Activated CD4-positive, alpha-beta T cell treated with anti-CD3 and anti-CD28 coated beads for 36 hours (primary cell): ENCODE measurements at regions of chr16 and their contacts with region 1.

Region 1: GRCh38 chr16:30615358-30616091 is 5.3 kb upstream of the ZNF689 start:
- DNase-seq: peak; percentile 94
- ATAC-seq: peak; percentile 89
- H3K4me3 Mint-ChIP-seq: no peak overlapping the region
- H3K27ac Mint-ChIP-seq: no peak overlapping the region
- H3K4me1 Mint-ChIP-seq: peaks cover 4% of the 10 kb centered on the region
- H3K27me3 Mint-ChIP-seq: no peaks in the 10 kb centered on the region

Region 2: DNA sequence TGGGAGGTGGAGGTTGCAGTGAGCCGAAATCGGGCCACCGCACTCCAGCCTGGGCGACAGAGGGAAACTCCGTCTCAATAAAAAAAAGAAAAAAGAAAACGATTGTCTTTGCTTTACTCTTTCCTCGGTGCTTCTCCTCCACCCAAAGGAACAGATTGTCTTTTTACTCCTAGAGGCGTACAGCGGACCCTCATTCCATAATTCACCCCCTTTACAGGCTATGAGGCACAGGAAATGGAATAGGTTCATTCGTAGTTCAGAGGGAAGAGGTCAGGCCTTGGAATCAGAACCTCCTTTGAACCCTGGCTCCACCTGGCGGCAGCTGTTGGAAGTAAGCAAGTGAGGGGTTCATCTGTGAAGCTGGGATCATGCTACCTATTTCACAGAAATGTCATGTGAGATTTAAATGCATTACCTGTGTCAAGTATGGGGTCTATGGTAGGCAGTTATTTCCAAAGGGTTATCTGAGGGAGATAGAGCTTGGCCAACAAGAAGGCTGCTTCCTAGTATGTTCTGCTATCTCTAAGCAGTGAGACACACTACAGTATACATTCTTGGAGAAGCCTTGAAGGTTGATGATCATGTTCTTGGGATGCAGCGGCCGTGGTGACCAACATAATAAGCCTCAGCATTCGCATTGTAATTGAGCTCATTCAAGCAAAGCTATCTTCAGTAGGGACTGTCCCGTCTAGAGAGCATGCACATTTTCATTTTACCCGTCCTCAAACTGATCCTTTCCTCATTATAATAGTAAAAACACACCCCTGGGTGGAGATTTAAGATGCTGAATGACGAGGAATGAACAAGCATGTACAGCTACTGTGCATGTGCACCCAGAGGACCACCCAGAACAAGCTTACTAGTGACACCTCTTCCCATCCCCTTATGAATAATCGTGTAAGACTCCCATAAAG is 13.4 kb after region 1 on chr16:
- CTCF ChIA-PET with region 1: interaction called, 30 read pairs
- POLR2A ChIA-PET with region 1: interaction called, 3 read pairs
- intact Hi-C with region 1: loop called in 1 of 2 experiments (anchors 1 kb)
- DNase-seq: peak; percentile 95
- ATAC-seq: peak; percentile 93
- H3K4me3 Mint-ChIP-seq: peak overlapping the region; percentile 58
- H3K27ac Mint-ChIP-seq: peak overlapping the region; percentile 82
- H3K4me1 Mint-ChIP-seq: peaks cover 14% of the 10 kb centered on the region
- H3K27me3 Mint-ChIP-seq: no peaks in the 10 kb centered on the region

Region 3: GRCh38 chr16:31108035-31108793 is 492.7 kb after region 1 on chr16 and contains the start of gene BCKDK:
- CTCF ChIA-PET with region 1: no interaction called
- POLR2A ChIA-PET with region 1: no interaction called
- intact Hi-C with region 1: no loop called
- DNase-seq: peak; percentile 90
- ATAC-seq: peak; percentile 79
- H3K4me3 Mint-ChIP-seq: peak within 1 kb of the TSS; percentile 86
- H3K27ac Mint-ChIP-seq: peak within 1 kb of the TSS; percentile 96
- H3K4me1 Mint-ChIP-seq: peaks cover 22% of the 10 kb centered on the region
- H3K27me3 Mint-ChIP-seq: no peaks in the 10 kb centered on the region
- total RNA-seq, gene BCKDK: 50.0 to 53.3 TPM